ENCODE measurements at regions of chr1 and their contacts with region 1.

Region 1: DNA sequence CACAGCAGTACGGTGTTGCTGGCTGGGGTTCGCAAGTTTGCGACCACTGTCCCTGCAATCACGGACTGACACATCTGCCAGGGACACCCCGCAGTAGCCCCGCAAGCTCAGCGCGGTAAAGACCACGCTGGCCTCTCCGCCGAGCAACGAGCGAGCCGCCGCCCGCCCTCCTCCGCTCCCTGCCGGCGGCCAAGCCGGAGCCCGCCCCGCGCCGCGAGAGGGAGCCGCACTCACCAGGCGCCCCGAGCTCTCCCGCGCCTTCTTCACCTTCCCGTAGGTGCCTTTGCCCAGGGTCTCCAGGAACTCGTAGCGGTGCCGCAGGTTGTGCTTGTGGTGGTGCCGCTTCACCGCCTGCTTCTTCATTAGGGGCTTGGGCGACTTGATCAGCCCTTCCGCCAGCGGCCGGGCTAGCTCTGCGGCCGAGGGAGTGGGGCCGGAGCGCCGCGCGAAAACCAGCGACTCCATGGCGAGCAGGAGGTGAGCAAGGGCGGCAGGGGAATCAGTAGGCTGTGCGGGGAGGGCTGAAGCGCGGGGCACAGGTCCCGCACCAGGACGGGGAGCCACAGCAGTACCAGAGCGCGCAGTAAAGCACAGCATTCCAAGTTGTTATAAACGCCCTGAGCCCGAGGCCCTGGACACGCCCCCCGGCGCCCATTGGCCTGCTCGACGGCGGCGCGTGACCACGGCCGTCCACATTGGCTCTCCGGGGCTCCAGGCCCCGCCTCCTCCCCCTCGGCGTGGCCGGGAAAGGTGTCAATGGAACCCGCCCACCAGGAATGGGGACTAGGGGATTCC is at the start of gene NUAK2:
- DNase-seq: peak; percentile 89
- ATAC-seq: peak; percentile 90
- H3K4me3 ChIP-seq: peak within 1 kb of the TSS; percentile 65 to 100 (median 98)
- H3K4me3 Mint-ChIP-seq: peak within 1 kb of the TSS; percentile 97
- H3K27ac ChIP-seq: peak within 1 kb of the TSS; percentile 65 to 98
- H3K27ac Mint-ChIP-seq: peak within 1 kb of the TSS; percentile 95
- H3K4me1 ChIP-seq: peaks cover 52 to 54% of the 10 kb centered on the region in 2 donors
- H3K4me1 Mint-ChIP-seq: peaks cover 62% of the 10 kb centered on the region
- H3K27me3 ChIP-seq: no peaks in the 10 kb centered on the region
- H3K27me3 Mint-ChIP-seq: peaks cover 2% of the 10 kb centered on the region
- CTCF ChIP-seq: peak; percentile 35
- total RNA-seq, gene NUAK2: 102 and 105 TPM in 2 replicates

Region 2: GRCh38 chr1:204763706-204764427 is 557.5 kb before region 1 on chr1:
- CTCF ChIA-PET with region 1: no interaction called
- POLR2A ChIA-PET with region 1: no interaction called
- intact Hi-C with region 1: no loop called
- DNase-seq: peak; percentile 75
- ATAC-seq: peak; percentile 97
- H3K4me3 ChIP-seq: no peak overlapping the region
- H3K4me3 Mint-ChIP-seq: no peak overlapping the region
- H3K27ac ChIP-seq: no peak overlapping the region
- H3K27ac Mint-ChIP-seq: no peak overlapping the region
- H3K4me1 ChIP-seq: peaks cover 7 to 8% of the 10 kb centered on the region in 2 donors
- H3K4me1 Mint-ChIP-seq: peaks cover 6% of the 10 kb centered on the region
- H3K27me3 ChIP-seq: peaks cover 0 to 18% (median 1%) of the 10 kb centered on the region in 4 experiments
- H3K27me3 Mint-ChIP-seq: peaks cover 30% of the 10 kb centered on the region
- CTCF ChIP-seq: peak; percentile 88

Region 3: DNA sequence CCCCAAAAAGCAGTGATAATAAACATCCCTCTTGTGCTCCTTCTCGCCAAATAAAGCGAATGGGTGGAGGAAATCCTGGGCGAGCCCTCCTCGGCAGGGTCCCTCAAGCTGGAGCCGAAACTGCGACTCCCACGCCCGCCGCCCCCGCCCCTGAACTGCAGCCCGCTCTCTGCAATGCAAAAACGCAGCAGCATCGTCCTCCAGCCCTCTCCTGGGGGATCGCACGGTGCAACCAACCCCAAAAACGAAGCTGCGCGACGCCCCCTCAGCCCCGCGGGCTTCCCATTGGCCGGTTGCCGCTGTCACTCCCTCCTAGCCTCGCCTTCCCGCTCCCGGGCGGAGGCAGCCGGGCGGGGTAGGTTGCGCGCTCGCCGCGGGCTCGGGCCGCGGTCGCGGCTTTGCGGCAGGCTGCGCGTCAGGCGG is 93.8 kb before region 1 on chr1 and contains the start of gene TMCC2:
- CTCF ChIA-PET with region 1: interaction called, 25 read pairs
- POLR2A ChIA-PET with region 1: interaction called, 3 read pairs
- intact Hi-C with region 1: loop called (anchors 5 kb)
- DNase-seq: peak; percentile 83
- ATAC-seq: peak; percentile 87
- H3K4me3 ChIP-seq: peak within 1 kb of the TSS; percentile 21 to 73 (median 59)
- H3K4me3 Mint-ChIP-seq: peak within 1 kb of the TSS; percentile 97
- H3K27ac ChIP-seq: no peak within 1 kb of the TSS
- H3K27ac Mint-ChIP-seq: peak within 1 kb of the TSS; percentile 77
- H3K4me1 ChIP-seq: peaks cover 17 to 33% of the 10 kb centered on the region in 2 donors
- H3K4me1 Mint-ChIP-seq: peaks cover 30% of the 10 kb centered on the region
- H3K27me3 ChIP-seq: peaks cover 0 to 14% (median 2%) of the 10 kb centered on the region in 4 experiments
- H3K27me3 Mint-ChIP-seq: peaks cover 21% of the 10 kb centered on the region
- CTCF ChIP-seq: no peak
- total RNA-seq, gene TMCC2: 3.3 and 4.0 TPM in 2 replicates

Region 4: DNA sequence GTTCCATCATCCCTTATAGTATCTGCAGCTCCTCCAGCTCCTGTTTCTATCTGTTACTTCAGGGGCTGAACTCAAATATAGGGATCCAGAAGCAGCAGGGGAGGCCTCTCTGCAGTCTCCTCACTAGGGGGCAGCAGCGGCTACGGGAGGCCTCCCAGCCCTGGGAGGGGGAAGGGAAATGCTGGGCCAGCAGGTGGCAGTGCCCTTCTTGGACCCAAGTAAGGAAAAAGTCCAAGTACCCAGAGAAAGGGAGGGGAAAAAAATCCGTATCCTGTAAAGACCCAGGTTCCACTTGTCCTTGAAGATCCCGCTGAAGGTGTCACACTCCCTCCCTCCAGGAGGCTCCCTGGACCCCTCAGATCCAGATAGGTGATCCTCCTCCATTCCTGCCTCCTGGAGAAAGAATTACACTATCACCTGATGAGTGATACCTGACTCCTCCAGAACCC is 14.3 kb after region 1 on chr1:
- CTCF ChIA-PET with region 1: interaction called, 2,421 read pairs
- POLR2A ChIA-PET with region 1: no interaction called
- intact Hi-C with region 1: loop called (anchors 1 kb)
- DNase-seq: peak; percentile 87
- ATAC-seq: peak; percentile 96
- H3K4me3 ChIP-seq: no peak overlapping the region
- H3K4me3 Mint-ChIP-seq: no peak overlapping the region
- H3K27ac ChIP-seq: no peak overlapping the region
- H3K27ac Mint-ChIP-seq: no peak overlapping the region
- H3K4me1 ChIP-seq: peaks cover 0 to 4% of the 10 kb centered on the region in 2 donors
- H3K4me1 Mint-ChIP-seq: peaks cover 9% of the 10 kb centered on the region
- H3K27me3 ChIP-seq: no peaks in the 10 kb centered on the region
- H3K27me3 Mint-ChIP-seq: no peaks in the 10 kb centered on the region
- CTCF ChIP-seq: peak; percentile 91

Region 5: DNA sequence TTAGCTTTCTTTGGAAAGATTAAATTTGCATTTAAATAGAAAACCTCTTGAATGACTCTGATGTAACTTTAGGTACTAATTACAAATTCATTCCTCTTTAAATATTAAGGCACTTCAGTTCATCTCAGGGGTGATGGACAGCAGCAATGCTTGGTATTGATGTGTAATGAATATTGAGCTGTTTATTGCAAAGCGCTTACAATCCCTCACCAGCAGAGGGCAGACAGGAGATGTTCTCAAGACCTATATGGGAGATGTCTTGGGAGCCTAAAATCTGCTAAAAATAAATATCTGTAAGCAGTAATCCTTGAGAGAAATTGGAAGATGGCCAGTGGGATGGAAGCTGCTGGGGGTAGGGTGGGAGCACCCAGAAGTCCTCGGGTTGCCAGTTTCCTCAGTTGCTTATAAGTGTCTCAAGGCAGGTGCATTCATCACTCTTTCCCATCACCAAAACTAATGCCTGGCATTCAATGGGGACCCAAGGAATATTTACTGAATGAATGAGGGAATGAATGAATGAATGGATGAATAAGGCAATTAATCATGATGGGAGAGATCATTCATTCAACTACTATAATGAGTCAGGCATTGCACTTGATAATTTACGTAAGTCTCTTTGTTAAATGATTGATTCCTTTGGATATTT is 33.0 kb after region 1 on chr1:
- CTCF ChIA-PET with region 1: interaction called, 31 read pairs
- POLR2A ChIA-PET with region 1: no interaction called
- intact Hi-C with region 1: no loop called
- DNase-seq: peak; percentile 78
- ATAC-seq: peak; percentile 58
- H3K4me3 ChIP-seq: no peak overlapping the region
- H3K4me3 Mint-ChIP-seq: no peak overlapping the region
- H3K27ac ChIP-seq: no peak overlapping the region
- H3K27ac Mint-ChIP-seq: no peak overlapping the region
- H3K4me1 ChIP-seq: peaks cover 16 to 20% of the 10 kb centered on the region in 2 donors
- H3K4me1 Mint-ChIP-seq: peaks cover 29% of the 10 kb centered on the region
- H3K27me3 ChIP-seq: peaks cover 0 to 4% (median 0%) of the 10 kb centered on the region in 4 experiments
- H3K27me3 Mint-ChIP-seq: peaks cover 19% of the 10 kb centered on the region
- CTCF ChIP-seq: peak; percentile 95

Measured in B cell (primary cell).